CD4-positive, alpha-beta memory T cell (primary cell): ENCODE measurements at regions of chr3 and their contacts with region 1.

Region 1: GRCh38 chr3:159884661-159885402 is 103.8 kb upstream of the IL12A start:
- DNase-seq: peak in 3 of 5 donors; percentile 9 to 15 (median 15)
- H3K4me3 ChIP-seq: no peak overlapping the region
- H3K4me3 Mint-ChIP-seq: no peak overlapping the region
- H3K27ac ChIP-seq: no peak overlapping the region
- H3K27ac Mint-ChIP-seq: peak overlapping the region in 1 of 7 donors; percentile 32
- H3K4me1 ChIP-seq: no peaks in the 10 kb centered on the region
- H3K4me1 Mint-ChIP-seq: no peaks in the 10 kb centered on the region
- H3K27me3 ChIP-seq: no peaks in the 10 kb centered on the region
- H3K27me3 Mint-ChIP-seq: peaks cover 3 to 10% of the 10 kb centered on the region in 2 donors

Region 2: GRCh38 chr3:160003520-160004128 is 118.8 kb after region 1 on chr3:
- CTCF ChIA-PET with region 1: interaction called, 31 read pairs
- POLR2A ChIA-PET with region 1: no interaction called
- intact Hi-C with region 1: loop called (anchors 2 kb)
- DNase-seq: peak in 2 of 5 donors; percentile 9
- H3K4me3 ChIP-seq: no peak overlapping the region
- H3K4me3 Mint-ChIP-seq: no peak overlapping the region
- H3K27ac ChIP-seq: no peak overlapping the region
- H3K27ac Mint-ChIP-seq: no peak overlapping the region
- H3K4me1 ChIP-seq: no peaks in the 10 kb centered on the region
- H3K4me1 Mint-ChIP-seq: peaks cover 0 to 1% (median 0%) of the 10 kb centered on the region in 4 donors
- H3K27me3 ChIP-seq: no peaks in the 10 kb centered on the region
- H3K27me3 Mint-ChIP-seq: no peaks in the 10 kb centered on the region